ENCODE measurements at regions of chr7 and their contacts with region 1.

Region 1: DNA sequence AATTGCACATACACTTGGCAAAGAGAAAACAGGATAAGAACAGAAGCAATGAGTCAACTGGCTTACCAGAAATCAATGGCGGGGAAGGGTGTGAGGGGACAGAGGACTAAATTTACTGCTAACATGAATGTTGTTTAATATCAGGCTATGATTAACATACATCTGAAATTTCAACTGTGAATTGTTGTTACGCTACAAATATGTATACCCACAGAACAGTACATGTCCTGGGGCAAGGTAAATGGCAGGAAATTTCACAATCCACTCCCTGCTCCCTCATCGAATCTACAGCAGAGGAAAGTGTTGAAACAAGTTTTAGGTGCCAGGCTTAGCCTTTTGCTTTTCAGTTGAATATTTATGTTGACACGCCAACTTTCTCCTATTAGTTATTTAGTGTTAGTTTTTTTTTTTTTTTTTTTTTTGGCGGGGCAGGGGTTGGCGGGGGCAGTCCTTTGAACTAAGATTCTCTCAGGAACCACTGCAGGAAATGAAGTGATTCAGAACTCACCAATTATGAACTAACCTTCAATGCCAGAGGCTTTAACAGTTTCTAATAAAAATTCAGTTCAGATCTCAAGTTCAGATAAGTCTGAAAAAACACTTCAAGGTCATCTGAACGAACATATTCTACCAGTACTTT is 99.0 kb downstream of the UBE2H start:
- DNase-seq: peak; percentile 75
- ATAC-seq: peak; percentile 63
- H3K4me3 ChIP-seq: peak overlapping the region; percentile 50
- H3K27ac ChIP-seq: peak overlapping the region; percentile 83
- H3K4me1 ChIP-seq: peaks cover 41% of the 10 kb centered on the region
- H3K27me3 ChIP-seq: no peaks in the 10 kb centered on the region
- CTCF ChIP-seq: no peak

Region 2: GRCh38 chr7:129635300-129636029 is 218.3 kb before region 1 on chr7:
- CTCF ChIA-PET with region 1: no interaction called
- POLR2A ChIA-PET with region 1: no interaction called
- intact Hi-C with region 1: no loop called
- DNase-seq: peak; percentile 76
- ATAC-seq: peak; percentile 100
- H3K4me3 ChIP-seq: no peak overlapping the region
- H3K27ac ChIP-seq: no peak overlapping the region
- H3K4me1 ChIP-seq: peaks cover 5% of the 10 kb centered on the region; the same call in 1 of the 2 replicates
- H3K27me3 ChIP-seq: no peaks in the 10 kb centered on the region
- CTCF ChIP-seq: peak; percentile 88

Region 3: GRCh38 chr7:129896568-129897382 is 43.0 kb after region 1 on chr7:
- CTCF ChIA-PET with region 1: no interaction called
- POLR2A ChIA-PET with region 1: no interaction called
- intact Hi-C with region 1: loop called (anchors 1 kb)
- DNase-seq: peak; percentile 70
- ATAC-seq: peak; percentile 96
- H3K4me3 ChIP-seq: no peak overlapping the region
- H3K27ac ChIP-seq: peak overlapping the region; percentile 54
- H3K4me1 ChIP-seq: peaks cover 15% of the 10 kb centered on the region
- H3K27me3 ChIP-seq: no peaks in the 10 kb centered on the region
- CTCF ChIP-seq: no peak